ENCODE measurements at regions of chr2 and their contacts with region 1.

Region 1: GRCh38 chr2:162480067-162480466 is 136.1 kb downstream of the GCA start:
- DNase-seq: no peak
- H3K4me3 ChIP-seq: no peak overlapping the region
- H3K27ac ChIP-seq: no peak overlapping the region
- H3K4me1 ChIP-seq: no peaks in the 10 kb centered on the region
- H3K27me3 ChIP-seq: no peaks in the 10 kb centered on the region
- CTCF ChIP-seq: no peak
- EP300 ChIP-seq: no peak
- POLR2A ChIP-seq: no peak

Region 2: GRCh38 chr2:161426922-161427663 is 1053.0 kb before region 1 on chr2:
- intact Hi-C with region 1: loop called in 1 of 4 experiments (anchors 5 kb)
- DNase-seq: no peak
- H3K4me3 ChIP-seq: no peak overlapping the region
- H3K27ac ChIP-seq: no peak overlapping the region
- H3K4me1 ChIP-seq: peaks cover 8% of the 10 kb centered on the region
- H3K27me3 ChIP-seq: peaks cover 5% of the 10 kb centered on the region
- CTCF ChIP-seq: no peak
- EP300 ChIP-seq: no peak
- POLR2A ChIP-seq: no peak

Region 3: DNA sequence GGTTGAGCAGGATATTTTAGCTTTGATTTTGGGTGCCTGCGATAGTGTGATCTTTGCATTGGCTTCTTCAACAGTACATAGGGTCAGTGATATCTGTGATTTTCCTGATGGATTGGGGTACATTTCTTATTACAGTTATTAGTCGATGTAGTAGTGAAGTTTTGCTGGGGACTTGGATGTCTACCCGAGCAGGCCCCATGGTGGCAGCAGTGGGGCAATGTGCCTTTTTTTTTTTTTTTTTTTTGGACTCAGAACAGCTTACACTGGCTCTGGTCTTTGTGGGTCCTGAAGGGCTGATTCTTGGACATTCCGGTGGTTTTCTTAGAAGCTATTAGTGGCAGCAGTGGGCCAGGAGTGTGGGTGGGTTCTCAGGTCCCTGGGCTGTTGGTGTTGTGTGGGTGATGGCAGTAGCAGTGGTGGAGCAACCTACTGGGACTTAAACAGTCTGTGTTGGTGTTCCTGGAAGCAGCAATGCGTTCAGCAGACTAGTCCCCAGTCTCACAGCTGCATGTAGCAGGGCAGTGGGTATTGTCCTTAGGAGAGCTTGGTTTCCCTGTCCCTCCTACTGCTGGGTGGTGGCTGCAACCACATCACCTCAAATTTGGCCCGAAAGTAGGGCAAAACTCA is 909.5 kb before region 1 on chr2:
- intact Hi-C with region 1: no loop called
- DNase-seq: no peak
- H3K4me3 ChIP-seq: no peak overlapping the region
- H3K27ac ChIP-seq: no peak overlapping the region
- H3K4me1 ChIP-seq: no peaks in the 10 kb centered on the region
- H3K27me3 ChIP-seq: no peaks in the 10 kb centered on the region
- CTCF ChIP-seq: no peak
- EP300 ChIP-seq: no peak
- POLR2A ChIP-seq: no peak

Region 4: DNA sequence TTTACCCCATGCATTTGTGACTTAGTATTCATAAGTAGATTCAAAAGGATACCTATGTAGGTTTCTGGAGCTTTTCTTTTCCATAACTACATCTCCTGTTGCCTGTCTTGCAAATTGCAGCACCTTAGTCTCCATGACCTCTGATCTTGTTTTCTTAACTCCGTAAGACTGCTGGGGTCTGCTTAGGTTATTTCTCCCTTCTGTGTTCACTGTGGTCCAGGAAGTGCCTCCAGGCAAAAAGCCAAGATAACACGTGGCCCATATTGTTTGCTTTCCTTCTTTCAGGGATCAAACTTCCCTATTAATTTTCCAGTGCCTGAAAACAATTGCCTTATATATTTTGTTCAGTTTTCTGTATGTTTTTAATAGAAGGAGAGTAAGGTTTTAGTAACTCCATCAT is 49.7 kb before region 1 on chr2:
- intact Hi-C with region 1: no loop called
- DNase-seq: no peak
- H3K4me3 ChIP-seq: no peak overlapping the region
- H3K27ac ChIP-seq: no peak overlapping the region
- H3K4me1 ChIP-seq: no peaks in the 10 kb centered on the region
- H3K27me3 ChIP-seq: no peaks in the 10 kb centered on the region
- CTCF ChIP-seq: no peak
- EP300 ChIP-seq: no peak
- POLR2A ChIP-seq: no peak

Region 5: DNA sequence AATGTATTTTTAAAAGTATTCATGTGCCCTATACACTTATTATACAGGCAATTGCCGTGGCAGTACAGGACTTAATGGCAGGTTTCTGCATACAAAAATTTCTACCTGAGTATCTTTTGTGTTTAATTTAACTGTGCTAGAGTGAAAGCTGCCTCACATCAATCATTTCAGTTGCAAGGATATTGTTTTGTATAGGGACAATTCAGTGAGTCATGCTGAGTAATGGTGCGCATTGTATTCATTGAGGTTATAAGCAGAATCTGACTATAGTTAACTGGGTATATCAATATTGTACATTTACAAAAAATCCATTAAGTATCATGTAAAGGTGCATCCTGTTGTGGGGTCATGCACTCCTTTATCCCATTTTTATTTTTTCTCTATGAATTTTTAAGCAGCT is 14.6 kb before region 1 on chr2:
- intact Hi-C with region 1: loop called in 1 of 4 experiments (anchors 1 kb)
- DNase-seq: no peak
- H3K4me3 ChIP-seq: no peak overlapping the region
- H3K27ac ChIP-seq: no peak overlapping the region
- H3K4me1 ChIP-seq: no peaks in the 10 kb centered on the region
- H3K27me3 ChIP-seq: no peaks in the 10 kb centered on the region
- CTCF ChIP-seq: no peak
- EP300 ChIP-seq: no peak
- POLR2A ChIP-seq: no peak

Measured in ovary (tissue), 10 donors.